ENCODE measurements at regions of chr11 and their contacts with region 1.

Region 1: GRCh38 chr11:118488480-118489109 is 38.7 kb upstream of the TTC36 start:
- DNase-seq: peak; percentile 85
- ATAC-seq: peak; percentile 72
- H3K4me3 Mint-ChIP-seq: no peak overlapping the region
- H3K27ac Mint-ChIP-seq: peak overlapping the region; percentile 29
- H3K4me1 Mint-ChIP-seq: peaks cover 5% of the 10 kb centered on the region
- H3K27me3 Mint-ChIP-seq: no peaks in the 10 kb centered on the region

Region 2: DNA sequence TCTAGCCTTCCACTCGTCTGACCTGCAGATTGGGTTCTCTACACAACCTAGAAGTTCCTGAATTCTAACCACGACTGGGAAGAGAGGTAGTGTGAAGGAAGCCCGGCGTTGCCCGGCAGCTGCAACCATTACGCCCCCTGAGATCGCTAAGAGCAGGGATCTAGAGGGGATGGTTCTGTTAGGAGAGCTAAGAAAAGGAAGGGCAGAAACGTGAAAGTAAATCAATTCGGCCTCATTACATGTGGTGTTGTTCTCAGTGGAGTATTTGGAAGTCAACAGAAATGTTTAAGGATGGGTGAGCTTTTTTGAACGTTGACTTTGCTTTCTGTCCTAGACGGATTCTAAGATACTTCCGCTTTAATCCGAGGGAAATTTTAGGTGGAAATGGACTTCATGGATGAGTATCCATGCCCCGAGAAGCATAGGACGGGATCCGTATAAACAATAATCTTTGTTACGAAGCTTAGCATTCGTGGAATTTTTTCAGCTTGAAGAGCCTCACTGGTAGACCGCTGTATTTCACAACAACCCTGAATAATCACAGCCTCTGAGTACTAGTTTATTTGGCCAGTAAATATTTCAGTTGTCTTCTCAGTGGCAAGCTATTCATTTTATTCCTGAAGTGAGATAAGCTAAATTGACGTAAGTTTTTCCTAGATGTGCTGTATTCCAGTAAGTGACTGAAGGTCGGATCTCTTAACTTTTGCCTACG is 86.6 kb before region 1 on chr11:
- CTCF ChIA-PET with region 1: interaction called, 14 read pairs
- DNase-seq: no peak
- ATAC-seq: no peak
- H3K4me3 Mint-ChIP-seq: peak overlapping the region; percentile 93
- H3K27ac Mint-ChIP-seq: peak overlapping the region; percentile 99
- H3K4me1 Mint-ChIP-seq: peaks cover 79% of the 10 kb centered on the region
- H3K27me3 Mint-ChIP-seq: no peaks in the 10 kb centered on the region